AG04449 (cell line): ENCODE measurements at regions of chr11 and their contacts with region 1.

Region 1: GRCh38 chr11:106585061-106585460 is 433.2 kb downstream of the GUCY1A2 start:
- DNase-seq: peak; percentile 1
- H3K4me3 ChIP-seq: no peak overlapping the region
- CTCF ChIP-seq: peak; percentile 40

Region 2: DNA sequence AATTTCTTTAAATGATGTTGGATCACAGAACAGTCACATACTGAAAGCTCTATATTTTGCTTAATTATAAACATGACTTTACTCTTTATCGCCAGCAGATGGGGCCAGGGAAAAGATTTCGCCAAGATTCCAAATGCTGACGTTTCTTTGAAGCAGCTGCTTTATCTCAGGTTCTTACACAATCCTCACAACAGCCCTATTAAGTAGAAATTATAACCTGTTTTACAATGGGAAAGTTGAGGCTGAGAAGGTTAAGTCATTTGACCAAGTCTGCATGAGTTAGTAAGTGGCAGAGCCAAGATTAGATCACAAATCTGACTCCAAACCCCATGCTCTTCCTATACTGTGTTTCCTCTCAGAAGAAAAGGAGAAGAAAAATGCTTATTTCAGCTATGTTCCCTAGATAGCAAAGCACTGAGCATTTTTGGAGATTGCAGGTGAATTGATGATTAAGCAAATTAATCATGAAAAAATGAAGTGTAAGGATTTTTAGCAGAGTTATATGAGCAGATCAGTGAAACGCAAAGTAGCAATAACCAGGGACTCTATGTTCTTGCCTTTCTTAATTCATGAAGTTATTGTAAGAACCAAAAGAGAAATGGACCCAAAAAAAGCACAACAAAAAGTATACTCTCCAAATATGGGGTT is 428.6 kb before region 1 on chr11:
- CTCF ChIA-PET with region 1: interaction called, 32 read pairs
- POLR2A ChIA-PET with region 1: no interaction called
- DNase-seq: peak; percentile 31
- H3K4me3 ChIP-seq: no peak overlapping the region
- CTCF ChIP-seq: peak; percentile 41

Region 3: DNA sequence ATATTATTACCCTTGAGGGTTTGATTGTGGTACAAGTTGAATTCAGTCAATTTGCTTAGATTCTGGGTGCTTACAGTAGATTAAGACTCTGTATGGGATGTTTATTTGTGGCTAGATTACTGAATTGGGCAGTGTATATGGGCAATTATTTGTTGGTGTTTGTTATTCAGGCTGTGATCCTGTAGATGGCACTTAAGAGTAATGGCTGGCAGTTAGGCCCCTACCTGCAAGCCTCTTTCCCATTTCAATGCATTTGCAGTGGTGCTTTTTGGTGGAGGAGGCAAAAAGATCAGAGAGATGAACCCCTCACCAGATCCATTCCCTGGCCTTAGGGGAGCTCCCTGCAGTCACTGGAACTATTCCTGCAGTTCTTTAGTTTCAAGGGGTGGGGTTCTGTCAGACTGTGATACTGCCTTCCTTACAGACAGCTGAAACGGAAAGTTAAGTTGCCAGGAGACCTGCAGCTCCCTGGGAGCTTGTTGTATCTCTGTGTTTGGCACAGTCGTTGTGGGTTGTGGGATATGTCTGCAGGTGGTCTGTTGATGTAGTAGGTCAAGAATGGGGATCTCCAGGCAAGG is 308.1 kb before region 1 on chr11:
- CTCF ChIA-PET with region 1: interaction called, 10 read pairs
- POLR2A ChIA-PET with region 1: no interaction called
- DNase-seq: no peak
- H3K4me3 ChIP-seq: no peak overlapping the region
- CTCF ChIP-seq: peak; percentile 21

Region 4: GRCh38 chr11:106322111-106322510 is 262.9 kb before region 1 on chr11:
- CTCF ChIA-PET with region 1: interaction called, 23 read pairs
- POLR2A ChIA-PET with region 1: no interaction called
- DNase-seq: no peak
- H3K4me3 ChIP-seq: no peak overlapping the region
- CTCF ChIP-seq: no peak

Region 5: GRCh38 chr11:106503901-106504300 is 81.2 kb before region 1 on chr11:
- CTCF ChIA-PET with region 1: no interaction called
- POLR2A ChIA-PET with region 1: no interaction called
- DNase-seq: no peak
- H3K4me3 ChIP-seq: no peak overlapping the region
- CTCF ChIP-seq: no peak

Region 6: DNA sequence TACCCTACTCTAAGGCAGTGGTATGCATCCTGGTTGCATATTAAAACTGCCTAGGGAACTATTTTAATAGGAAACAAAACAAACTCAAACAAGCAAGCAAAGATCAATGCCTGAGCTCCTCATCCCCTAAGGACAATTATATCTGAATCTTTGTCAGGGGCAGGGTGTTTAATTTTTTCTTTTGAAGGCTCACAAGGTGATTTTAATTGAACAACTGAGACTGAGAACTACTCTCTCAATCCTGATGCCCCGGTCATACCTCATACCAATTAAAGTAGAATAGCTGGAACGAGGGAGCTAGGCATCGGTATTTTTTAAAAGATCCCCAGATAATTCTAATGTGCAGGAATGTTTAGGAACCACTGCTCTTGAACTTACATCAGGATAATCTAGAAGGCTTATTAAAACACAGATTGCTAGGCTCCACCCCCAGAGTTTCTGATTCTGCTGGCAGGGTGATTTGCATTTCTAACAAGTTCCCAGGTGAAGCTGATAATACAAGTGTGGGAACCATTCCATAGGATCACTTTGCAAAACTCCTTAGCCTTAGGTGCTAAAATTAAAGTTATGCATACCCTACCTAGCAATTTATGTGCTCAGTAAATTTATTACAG is 16.7 kb after region 1 on chr11:
- CTCF ChIA-PET with region 1: interaction called, 14 read pairs
- POLR2A ChIA-PET with region 1: no interaction called
- DNase-seq: no peak
- H3K4me3 ChIP-seq: no peak overlapping the region
- CTCF ChIP-seq: no peak